ENCODE measurements at regions of chr1 and their contacts with region 1.

Region 1: DNA sequence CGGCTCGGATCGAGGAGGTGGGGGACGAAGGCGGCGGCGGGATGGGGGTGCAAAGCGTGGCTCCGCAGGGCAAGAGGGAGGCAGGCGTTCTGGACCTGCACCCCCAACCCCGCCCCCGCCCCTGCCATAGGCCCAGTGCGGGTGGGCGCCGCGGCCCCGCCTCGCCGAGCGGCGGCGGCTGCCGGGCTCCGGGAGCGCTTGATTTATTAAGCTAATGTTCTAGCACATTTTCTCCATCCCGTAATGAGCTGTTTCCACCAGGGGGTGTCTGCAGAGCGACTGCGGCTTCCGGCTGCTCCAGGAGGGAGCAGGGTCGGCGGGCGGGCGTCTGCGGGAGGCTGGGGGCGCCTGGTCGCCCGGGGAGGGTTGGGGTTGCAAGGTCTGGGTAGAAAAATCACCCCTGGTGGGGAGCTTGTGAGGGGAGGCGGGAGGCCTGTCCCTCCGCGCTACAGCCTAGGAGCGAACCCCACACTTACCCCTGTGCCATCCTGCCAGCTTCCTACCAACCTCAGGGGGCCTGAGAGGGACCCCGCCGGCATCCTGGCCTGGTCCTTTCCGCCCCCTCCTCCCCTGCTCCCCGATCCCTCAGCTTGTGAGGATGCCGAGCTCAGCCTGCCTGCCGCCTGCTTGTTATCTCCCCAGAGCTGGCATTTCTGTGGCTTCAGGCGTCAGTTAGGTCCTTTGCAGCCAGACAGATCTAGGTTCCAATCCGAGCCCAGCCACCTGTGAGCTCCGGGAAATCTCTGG is 48.5 kb upstream of the ACOT11 start:
- DNase-seq: peak in 1 of 2 experiments; percentile 74
- H3K4me3 ChIP-seq: peak overlapping the region; percentile 25 to 65 (median 48)
- H3K27ac ChIP-seq: no peak overlapping the region
- H3K4me1 ChIP-seq: peaks cover 0 to 20% (median 10%) of the 10 kb centered on the region in 4 experiments; a peak in 6 of 7 replicates
- H3K27me3 ChIP-seq: peaks cover 0 to 3% (median 1%) of the 10 kb centered on the region in 4 experiments; a peak in 5 of 7 replicates
- CTCF ChIP-seq: peak in 2 of 3 experiments; percentile 27 to 49; a peak in 3 of 4 replicates
- EP300 ChIP-seq: no peak
- POLR2A ChIP-seq: no peak
- RAD21 ChIP-seq: peak in 1 of 2 experiments; percentile 44; a peak in 2 of 4 replicates

Region 2: GRCh38 chr1:54488779-54489626 is 10.5 kb before region 1 on chr1:
- CTCF ChIA-PET with region 1: interaction called, 17 read pairs
- POLR2A ChIA-PET with region 1: interaction called, 6 read pairs
- DNase-seq: peak; percentile 74 to 96
- H3K4me3 ChIP-seq: peak overlapping the region; percentile 24 to 69 (median 64); a peak in 7 of 8 replicates
- H3K27ac ChIP-seq: peak overlapping the region; percentile 96
- H3K4me1 ChIP-seq: peaks cover 7 to 22% (median 15%) of the 10 kb centered on the region in 4 experiments
- H3K27me3 ChIP-seq: peaks cover 0 to 18% (median 11%) of the 10 kb centered on the region in 4 experiments; a peak in 6 of 7 replicates
- CTCF ChIP-seq: peak; percentile 75 to 96 (median 79)
- EP300 ChIP-seq: peak in 1 of 2 experiments; percentile 84; a peak in 1 of 3 replicates
- POLR2A ChIP-seq: peak in 1 of 2 experiments; percentile 47; a peak in 1 of 3 replicates
- RAD21 ChIP-seq: peak; percentile 88 to 90

Region 3: DNA sequence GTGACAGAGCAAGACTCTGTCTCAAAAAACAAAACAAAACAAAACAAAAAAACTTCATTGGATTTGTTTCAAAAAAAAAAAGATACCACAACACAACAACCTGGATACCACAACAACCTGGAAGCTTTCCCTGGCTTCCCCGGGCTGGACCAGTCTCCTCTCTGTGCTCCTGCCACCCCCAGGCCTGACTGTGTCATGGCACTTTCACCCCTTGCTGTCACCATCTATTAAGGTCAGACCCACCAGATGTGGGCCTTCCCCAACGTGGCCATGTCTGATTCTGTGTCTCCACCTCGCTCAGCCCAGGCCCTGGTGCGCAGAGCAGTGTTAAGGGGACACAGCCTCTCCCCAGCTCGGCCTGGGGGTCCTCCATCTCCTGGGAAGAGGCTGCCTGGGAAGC is 20.2 kb after region 1 on chr1:
- CTCF ChIA-PET with region 1: interaction called, 16 read pairs
- POLR2A ChIA-PET with region 1: no interaction called
- DNase-seq: peak in 1 of 2 experiments; percentile 63
- H3K4me3 ChIP-seq: no peak overlapping the region
- H3K27ac ChIP-seq: no peak overlapping the region
- H3K4me1 ChIP-seq: no peaks in the 10 kb centered on the region
- H3K27me3 ChIP-seq: no peaks in the 10 kb centered on the region
- CTCF ChIP-seq: peak; percentile 57 to 80 (median 65)
- EP300 ChIP-seq: no peak
- POLR2A ChIP-seq: no peak
- RAD21 ChIP-seq: peak; percentile 65 to 73